ENCODE measurements at regions of chr17 and their contacts with region 1.

Region 1: GRCh38 chr17:65181237-65182061 is 44.3 kb downstream of the RGS9 start:
- DNase-seq: peak; percentile 55
- H3K4me3 Mint-ChIP-seq: peak overlapping the region; percentile 24
- H3K27ac Mint-ChIP-seq: peak overlapping the region; percentile 96
- H3K4me1 Mint-ChIP-seq: peaks cover 82% of the 10 kb centered on the region
- H3K27me3 Mint-ChIP-seq: no peaks in the 10 kb centered on the region

Region 2: DNA sequence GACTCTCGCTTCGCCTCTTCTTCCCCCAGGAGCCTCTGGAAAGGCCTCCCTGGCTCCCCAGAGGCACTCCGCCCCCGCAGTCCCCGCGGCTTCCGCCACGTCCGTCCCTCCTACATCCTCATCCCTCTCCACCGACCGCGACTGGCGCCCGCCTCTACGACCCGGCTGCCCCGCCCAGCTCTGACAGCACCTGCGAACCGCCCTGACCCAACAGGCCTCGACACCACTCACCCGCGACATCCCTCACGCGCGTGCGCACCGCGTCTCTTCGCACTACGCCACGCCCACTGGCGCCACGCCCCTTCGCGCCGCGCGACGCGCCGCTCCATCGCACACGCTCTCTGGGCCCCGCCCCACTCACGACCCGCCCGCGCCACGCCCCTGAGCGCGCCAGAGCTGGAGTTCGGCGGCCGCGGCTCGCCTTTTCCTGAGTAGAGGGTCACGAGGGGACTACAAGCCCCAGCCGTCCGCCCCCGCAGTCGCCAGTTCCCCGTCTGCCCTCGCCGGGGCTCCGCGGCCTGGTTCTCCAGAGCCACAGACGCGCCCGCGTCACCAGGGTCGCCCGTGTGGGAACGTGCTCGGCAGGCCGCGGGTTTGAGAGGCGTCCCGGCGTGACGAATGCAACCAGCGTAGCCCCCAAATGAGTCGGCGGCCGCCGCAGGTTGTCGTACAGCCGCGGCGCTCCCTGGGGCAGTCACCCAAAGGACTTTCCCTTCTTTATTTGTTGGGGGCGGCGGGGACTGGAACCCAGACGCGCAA is 205.9 kb before region 1 on chr17:
- intact Hi-C with region 1: loop called (anchors 1 kb)
- DNase-seq: peak; percentile 98
- H3K4me3 Mint-ChIP-seq: peak overlapping the region; percentile 81
- H3K27ac Mint-ChIP-seq: peak overlapping the region; percentile 97
- H3K4me1 Mint-ChIP-seq: peaks cover 56% of the 10 kb centered on the region
- H3K27me3 Mint-ChIP-seq: no peaks in the 10 kb centered on the region

Region 3: GRCh38 chr17:65122836-65123756 is 58.4 kb before region 1 on chr17:
- intact Hi-C with region 1: loop called (anchors 2 kb)
- DNase-seq: peak; percentile 85
- H3K4me3 Mint-ChIP-seq: peak overlapping the region; percentile 82
- H3K27ac Mint-ChIP-seq: peak overlapping the region; percentile 95
- H3K4me1 Mint-ChIP-seq: peaks cover 35% of the 10 kb centered on the region
- H3K27me3 Mint-ChIP-seq: peaks cover 5% of the 10 kb centered on the region

Region 4: DNA sequence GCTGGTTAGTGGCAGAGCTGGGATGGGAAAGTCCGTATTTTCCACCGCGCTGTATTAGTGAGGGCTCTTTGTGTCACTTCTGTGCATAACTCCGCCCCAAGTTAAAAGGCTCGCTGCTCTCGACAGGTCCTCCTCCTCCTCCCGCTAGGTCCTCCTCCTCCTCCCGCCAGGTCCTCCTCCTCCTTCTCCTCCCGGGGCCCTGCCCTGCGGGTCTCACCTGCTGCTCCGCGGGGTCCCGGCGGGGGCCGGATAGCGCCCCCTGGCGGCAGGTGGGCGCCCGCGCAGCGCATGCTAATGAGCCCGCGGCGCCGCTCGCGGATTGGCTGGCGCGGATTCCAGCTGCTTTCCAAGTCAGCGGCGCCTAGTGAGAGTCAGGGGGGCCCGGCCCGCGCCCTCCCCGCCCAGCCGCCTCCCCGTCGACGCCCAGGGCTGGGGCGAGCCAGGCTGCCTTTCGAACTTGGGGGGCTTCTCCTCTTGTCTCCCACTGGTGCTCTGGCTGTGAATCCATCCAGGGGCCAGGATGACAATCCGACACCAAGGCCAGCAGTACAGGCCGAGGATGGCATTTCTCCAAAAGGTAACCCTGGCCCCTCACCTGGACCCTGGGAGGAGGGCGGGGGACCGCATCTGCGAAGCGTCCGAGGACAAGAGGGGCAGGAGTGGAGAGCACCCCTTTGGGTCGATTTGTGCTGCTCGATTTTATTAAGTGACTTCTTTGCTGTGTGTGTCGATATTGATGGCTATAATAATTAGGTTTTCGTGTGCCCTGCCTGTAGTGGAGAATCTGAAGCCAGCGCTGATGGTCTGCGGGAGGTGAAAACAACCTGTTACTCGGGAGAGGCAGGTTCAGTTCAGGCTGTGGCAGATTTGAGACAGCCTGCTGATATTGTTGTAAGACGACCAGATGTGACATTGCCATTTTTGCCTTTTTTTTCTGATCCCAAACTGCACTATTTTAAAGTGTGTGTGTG is 44.1 kb before region 1 on chr17 and contains the start of gene RGS9:
- intact Hi-C with region 1: loop called (anchors 2 kb)
- DNase-seq: peak; percentile 87
- H3K4me3 Mint-ChIP-seq: peak within 1 kb of the TSS; percentile 92
- H3K27ac Mint-ChIP-seq: peak within 1 kb of the TSS; percentile 89
- H3K4me1 Mint-ChIP-seq: peaks cover 43% of the 10 kb centered on the region
- H3K27me3 Mint-ChIP-seq: no peaks in the 10 kb centered on the region
- total RNA-seq, gene RGS9: 16.1 and 16.3 TPM in 2 replicates

Region 5: DNA sequence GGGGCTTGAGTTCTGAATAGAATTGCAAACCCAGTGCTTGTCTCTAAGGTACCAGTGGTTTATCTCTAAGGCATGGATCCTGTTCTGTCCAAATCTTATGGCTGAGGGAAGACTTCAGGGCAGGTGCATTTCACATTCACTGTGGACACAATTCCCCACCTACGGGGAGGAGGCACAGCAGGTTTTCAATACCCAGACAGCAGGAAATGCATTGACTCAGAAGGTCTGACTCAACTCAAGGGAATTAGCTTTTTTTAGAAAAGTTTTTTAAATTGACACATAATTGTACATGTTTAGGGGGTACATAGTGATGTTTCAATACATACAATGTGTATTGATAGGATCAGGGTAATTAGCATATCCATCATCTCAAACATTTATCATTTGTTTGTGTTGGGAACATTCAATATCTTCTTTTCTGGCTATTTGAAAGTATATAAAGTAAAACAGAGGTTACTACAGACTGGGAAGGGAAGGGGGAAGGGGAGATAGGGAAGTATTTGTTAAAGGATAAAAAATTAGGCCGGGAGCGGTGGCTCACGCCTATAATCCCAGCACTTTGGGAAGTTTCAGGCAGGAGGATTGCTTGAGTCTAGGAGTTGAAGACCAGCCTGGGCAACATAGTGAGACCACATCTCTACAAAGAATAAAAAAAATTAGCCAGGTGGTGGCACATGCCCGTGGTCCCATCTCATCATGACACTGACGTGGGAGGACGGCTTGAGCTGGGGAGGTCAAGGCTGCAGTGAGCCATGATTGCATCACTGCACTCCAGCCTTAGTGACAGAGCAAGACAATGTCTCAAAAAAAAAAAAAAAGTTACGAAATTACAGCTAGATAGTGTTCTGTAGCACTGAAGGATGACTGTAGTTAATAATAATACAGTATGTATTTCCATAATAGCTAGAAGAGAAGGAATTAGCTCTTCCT is 10.6 kb after region 1 on chr17:
- intact Hi-C with region 1: loop called (anchors 1 kb)
- DNase-seq: no peak
- H3K4me3 Mint-ChIP-seq: peak overlapping the region; percentile 13
- H3K27ac Mint-ChIP-seq: peak overlapping the region; percentile 81
- H3K4me1 Mint-ChIP-seq: peaks cover 53% of the 10 kb centered on the region
- H3K27me3 Mint-ChIP-seq: no peaks in the 10 kb centered on the region